Psoas muscle (tissue), 8 donors: ENCODE measurements at regions of chr13 and their contacts with region 1.

Region 1: GRCh38 chr13:26707122-26708006 is 53.2 kb downstream of the GPR12 start:
- DNase-seq: no peak
- ATAC-seq: no peak
- H3K4me3 ChIP-seq: no peak overlapping the region
- H3K27ac ChIP-seq: no peak overlapping the region
- H3K4me1 ChIP-seq: no peaks in the 10 kb centered on the region
- H3K27me3 ChIP-seq: peaks cover 0 to 4% (median 0%) of the 10 kb centered on the region in 3 donors
- CTCF ChIP-seq: peak; percentile 39

Region 2: GRCh38 chr13:26872525-26873385 is 165.4 kb after region 1 on chr13:
- intact Hi-C with region 1: loop called in 1 of 2 experiments (anchors 5 kb)
- DNase-seq: peak in 1 of 2 donors; percentile 41
- ATAC-seq: no peak
- H3K4me3 ChIP-seq: no peak overlapping the region
- H3K27ac ChIP-seq: no peak overlapping the region
- H3K4me1 ChIP-seq: no peaks in the 10 kb centered on the region
- H3K27me3 ChIP-seq: peaks cover 0 to 5% (median 2%) of the 10 kb centered on the region in 3 donors
- CTCF ChIP-seq: peak; percentile 40

Region 3: GRCh38 chr13:26929971-26930730 is 222.8 kb after region 1 on chr13:
- intact Hi-C with region 1: loop called (anchors 5 to 10 kb)
- DNase-seq: peak; percentile 56 to 72
- ATAC-seq: peak in 2 of 4 donors; percentile 60 to 71
- H3K4me3 ChIP-seq: no peak overlapping the region
- H3K27ac ChIP-seq: no peak overlapping the region
- H3K4me1 ChIP-seq: no peaks in the 10 kb centered on the region
- H3K27me3 ChIP-seq: no peaks in the 10 kb centered on the region
- CTCF ChIP-seq: peak; percentile 93

Region 4: DNA sequence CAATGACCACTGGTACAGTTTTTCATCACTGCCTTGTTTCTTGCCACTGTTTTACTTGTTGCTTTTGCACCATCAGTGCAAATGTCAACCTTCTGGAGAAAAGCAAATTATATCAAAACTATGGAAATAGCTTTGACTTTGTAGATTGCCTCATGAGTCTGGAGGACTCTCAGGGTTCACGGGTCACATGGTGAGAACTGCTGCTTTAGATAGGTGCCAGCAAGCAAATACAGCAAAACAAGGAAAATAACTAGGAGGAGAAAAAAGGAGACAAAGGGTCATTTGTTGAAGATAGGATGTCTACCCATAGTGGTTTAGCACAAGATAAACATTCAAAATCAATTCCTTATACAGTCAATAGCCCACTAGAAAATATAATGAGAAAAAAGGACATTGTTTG is 947.5 kb after region 1 on chr13:
- intact Hi-C with region 1: no loop called
- DNase-seq: no peak
- ATAC-seq: no peak
- H3K4me3 ChIP-seq: no peak overlapping the region
- H3K27ac ChIP-seq: no peak overlapping the region
- H3K4me1 ChIP-seq: no peaks in the 10 kb centered on the region
- H3K27me3 ChIP-seq: no peaks in the 10 kb centered on the region
- CTCF ChIP-seq: no peak